Activated CD4-positive, alpha-beta memory T cell treated with anti-CD3 and anti-CD28 coated beads for 36 hours (primary cell): ENCODE measurements at regions of chr11 and their contacts with region 1.

Region 1: GRCh38 chr11:114348200-114349191 is 51.8 kb downstream of the C11orf71 start:
- DNase-seq: peak; percentile 14
- H3K4me3 Mint-ChIP-seq: no peak overlapping the region
- H3K27ac Mint-ChIP-seq: no peak overlapping the region
- H3K4me1 Mint-ChIP-seq: peaks cover 5% of the 10 kb centered on the region
- H3K27me3 Mint-ChIP-seq: no peaks in the 10 kb centered on the region

Region 2: GRCh38 chr11:114400217-114400914 is 51.9 kb after region 1 on chr11 and contains the starts of genes C11orf71 and RBM7:
- CTCF ChIA-PET with region 1: interaction called, 3 read pairs
- POLR2A ChIA-PET with region 1: no interaction called
- intact Hi-C with region 1: loop called (anchors 2 kb)
- DNase-seq: peak; percentile 98
- H3K4me3 Mint-ChIP-seq: peak within 1 kb of the TSS; percentile 97
- H3K27ac Mint-ChIP-seq: peak within 1 kb of the TSS; percentile 99
- H3K4me1 Mint-ChIP-seq: peaks cover 48% of the 10 kb centered on the region
- H3K27me3 Mint-ChIP-seq: no peaks in the 10 kb centered on the region
- total RNA-seq, gene C11orf71: 5.0 to 5.5 TPM
- total RNA-seq, gene RBM7: 44.0 to 45.4 TPM

Region 3: GRCh38 chr11:114439229-114440120 is 91.0 kb after region 1 on chr11 and contains the start of gene REXO2:
- CTCF ChIA-PET with region 1: interaction called, 3 read pairs
- POLR2A ChIA-PET with region 1: no interaction called
- intact Hi-C with region 1: loop called (anchors 1 kb)
- DNase-seq: peak; percentile 96
- H3K4me3 Mint-ChIP-seq: peak within 1 kb of the TSS; percentile 97
- H3K27ac Mint-ChIP-seq: peak within 1 kb of the TSS; percentile 85
- H3K4me1 Mint-ChIP-seq: peaks cover 31% of the 10 kb centered on the region
- H3K27me3 Mint-ChIP-seq: no peaks in the 10 kb centered on the region
- total RNA-seq, gene REXO2: 60.1 to 62.0 TPM

Region 4: DNA sequence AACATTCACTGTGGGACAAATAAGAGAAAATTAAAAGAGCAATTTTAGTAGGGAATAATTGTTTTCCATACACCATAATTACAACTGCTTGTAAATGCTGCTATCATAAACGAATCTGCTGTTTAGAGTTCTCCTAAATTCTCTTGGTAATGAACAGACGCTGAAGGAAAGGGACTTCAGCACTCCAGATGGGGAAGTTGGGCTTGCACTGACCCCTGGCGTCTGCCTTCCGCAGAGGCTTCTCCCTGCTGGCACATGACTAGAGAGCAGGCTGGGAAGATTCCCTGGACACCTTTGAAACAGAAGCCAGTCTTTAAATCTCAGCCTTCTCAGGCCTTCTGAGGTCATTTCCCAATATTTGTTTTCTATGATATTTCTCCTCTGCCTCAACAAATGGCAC is 413.9 kb after region 1 on chr11:
- CTCF ChIA-PET with region 1: no interaction called
- POLR2A ChIA-PET with region 1: no interaction called
- intact Hi-C with region 1: loop called (anchors 2 kb)
- DNase-seq: peak; percentile 24
- H3K4me3 Mint-ChIP-seq: no peak overlapping the region
- H3K27ac Mint-ChIP-seq: no peak overlapping the region
- H3K4me1 Mint-ChIP-seq: no peaks in the 10 kb centered on the region
- H3K27me3 Mint-ChIP-seq: peaks cover 4% of the 10 kb centered on the region